Left cardiac atrium (tissue), 4 donors: ENCODE measurements at regions of chr17 and their contacts with region 1.

Region 1: GRCh38 chr17:2029911-2030778 is at the start of gene DPH1:
- DNase-seq: peak; percentile 92
- ATAC-seq: peak; percentile 85 to 90
- total RNA-seq, gene DPH1: 21.2 to 30.8 TPM

Region 2: GRCh38 chr17:1661045-1661444 is 369.1 kb before region 1 on chr17:
- intact Hi-C with region 1: loop called in 1 of 2 experiments (anchors 10 kb)
- DNase-seq: no peak
- ATAC-seq: no peak

Region 3: GRCh38 chr17:1716076-1716995 is 313.8 kb before region 1 on chr17:
- intact Hi-C with region 1: loop called in 1 of 2 experiments (anchors 5 kb)
- DNase-seq: peak; percentile 100
- ATAC-seq: peak; percentile 74 to 79

Region 4: DNA sequence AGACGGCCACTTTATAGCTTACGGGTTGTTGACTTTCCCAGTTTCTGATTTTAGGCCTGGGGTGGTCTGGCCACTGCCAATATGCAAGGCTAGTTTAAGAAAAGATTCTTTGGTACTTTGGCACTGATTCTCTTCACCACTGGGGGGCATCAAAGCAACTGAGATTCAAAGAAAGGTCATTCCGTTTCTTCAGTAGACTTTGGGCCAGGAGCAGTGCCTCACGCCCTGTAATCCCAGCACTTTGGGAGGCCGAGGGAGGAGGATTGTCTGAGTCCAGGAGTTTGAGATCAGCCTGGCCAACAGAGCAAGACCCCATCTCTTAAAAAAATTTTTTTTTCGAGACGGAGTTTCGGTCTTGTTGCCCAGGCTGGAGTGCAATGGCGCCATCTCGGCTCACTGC is 147.3 kb before region 1 on chr17:
- intact Hi-C with region 1: no loop called
- DNase-seq: no peak
- ATAC-seq: no peak

Region 5: DNA sequence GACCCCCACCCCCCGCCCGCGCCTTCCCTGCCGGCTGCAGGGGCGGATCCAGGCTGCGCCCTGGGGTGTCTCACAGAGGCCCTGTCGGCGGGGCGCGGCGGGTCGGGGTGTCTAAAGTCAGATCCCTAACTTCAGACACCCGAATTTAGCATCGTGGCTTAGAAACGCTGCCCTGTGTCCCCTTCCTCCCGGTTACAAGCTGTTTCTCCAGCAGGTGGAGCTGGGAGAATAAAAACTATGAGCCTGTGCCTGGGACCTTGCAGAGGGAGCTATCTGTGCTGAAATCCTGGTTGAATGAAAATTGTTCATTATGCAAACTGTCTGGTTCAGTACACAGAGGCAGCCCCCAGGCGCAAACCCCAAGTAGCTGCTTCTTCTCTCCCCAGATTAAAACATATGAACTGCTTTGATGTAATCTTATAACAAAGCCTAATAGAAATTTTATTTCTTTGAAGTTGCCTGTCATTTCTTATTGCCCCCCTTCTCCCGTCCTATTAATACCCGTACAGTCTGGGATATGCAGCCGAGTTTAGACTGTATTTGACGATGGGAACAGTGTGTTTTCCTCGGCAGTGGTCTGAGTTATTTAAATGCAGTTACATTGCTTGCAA is 121.3 kb before region 1 on chr17:
- intact Hi-C with region 1: loop called (anchors 2 to 5 kb)
- DNase-seq: peak; percentile 62
- ATAC-seq: peak; percentile 89 to 91

Region 6: GRCh38 chr17:1920948-1921351 is 109.2 kb before region 1 on chr17:
- intact Hi-C with region 1: loop called in 1 of 2 experiments (anchors 5 kb)
- DNase-seq: no peak
- ATAC-seq: peak; percentile 39 to 53